Activated CD8-positive, alpha-beta memory T cell treated with anti-CD3 and anti-CD28 coated beads, Interleukin-2, amount 10 ng/mL, durations not matched to agents 7 days and 5 days (primary cell): ENCODE measurements at regions of chr7 and their contacts with region 1.

Region 1: GRCh38 chr7:158976849-158977593 is 120.7 kb downstream of the DYNC2I1 start:
- DNase-seq: peak; percentile 92
- ATAC-seq: peak; percentile 82
- H3K4me3 Mint-ChIP-seq: peak overlapping the region; percentile 68
- H3K27ac Mint-ChIP-seq: peak overlapping the region; percentile 85
- H3K4me1 Mint-ChIP-seq: peaks cover 17% of the 10 kb centered on the region
- H3K27me3 Mint-ChIP-seq: no peaks in the 10 kb centered on the region

Region 2: DNA sequence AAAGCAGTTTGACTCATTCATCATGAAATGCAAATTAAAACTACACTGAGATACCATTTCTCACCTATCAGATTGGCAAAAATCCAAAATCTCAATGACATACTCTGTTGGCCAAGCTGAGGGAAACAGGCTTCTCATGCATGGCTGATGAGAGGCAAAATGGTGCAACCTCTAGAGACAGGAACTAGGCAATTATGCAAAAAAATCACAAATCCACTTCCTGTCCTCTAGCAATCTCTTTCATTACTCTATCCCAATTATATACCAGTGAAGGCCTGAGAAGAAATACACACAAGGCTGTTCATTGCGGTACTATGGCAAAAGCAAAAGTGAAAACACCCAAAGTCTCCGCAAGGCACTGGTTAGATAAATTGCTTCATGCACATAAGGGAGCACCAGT is 363.5 kb before region 1 on chr7:
- CTCF ChIA-PET with region 1: no interaction called
- DNase-seq: no peak
- ATAC-seq: no peak
- H3K4me3 Mint-ChIP-seq: no peak overlapping the region
- H3K27ac Mint-ChIP-seq: no peak overlapping the region
- H3K4me1 Mint-ChIP-seq: peaks cover 9% of the 10 kb centered on the region
- H3K27me3 Mint-ChIP-seq: no peaks in the 10 kb centered on the region

Region 3: DNA sequence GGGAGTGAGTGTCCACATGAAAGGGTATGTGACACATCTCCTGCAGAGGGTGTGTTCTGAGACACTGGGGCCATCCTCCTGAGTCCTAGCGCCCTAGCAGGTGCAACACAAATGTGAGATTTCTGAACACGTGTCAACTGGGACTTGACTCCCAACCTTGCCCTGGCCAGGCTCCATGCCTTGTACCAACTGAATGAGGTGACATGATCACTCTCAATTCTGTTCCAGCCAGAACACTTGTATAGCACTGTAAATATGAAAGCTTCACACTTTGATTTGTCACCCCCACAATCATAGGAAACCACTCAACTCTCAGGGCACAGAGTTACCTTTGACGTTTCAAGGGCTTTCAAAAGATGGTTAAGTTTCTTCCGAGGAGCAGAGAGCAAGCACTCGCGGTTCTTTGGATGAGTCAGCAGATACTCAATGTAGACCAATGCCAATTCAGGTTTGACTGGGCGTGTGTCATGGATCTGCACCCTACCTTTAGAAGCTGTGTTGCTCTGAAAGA is 321.0 kb before region 1 on chr7:
- CTCF ChIA-PET with region 1: interaction called, 11 read pairs
- DNase-seq: peak; percentile 92
- ATAC-seq: peak; percentile 98
- H3K4me3 Mint-ChIP-seq: peak overlapping the region; percentile 54
- H3K27ac Mint-ChIP-seq: peak overlapping the region; percentile 91
- H3K4me1 Mint-ChIP-seq: peaks cover 40% of the 10 kb centered on the region
- H3K27me3 Mint-ChIP-seq: no peaks in the 10 kb centered on the region

Region 4: DNA sequence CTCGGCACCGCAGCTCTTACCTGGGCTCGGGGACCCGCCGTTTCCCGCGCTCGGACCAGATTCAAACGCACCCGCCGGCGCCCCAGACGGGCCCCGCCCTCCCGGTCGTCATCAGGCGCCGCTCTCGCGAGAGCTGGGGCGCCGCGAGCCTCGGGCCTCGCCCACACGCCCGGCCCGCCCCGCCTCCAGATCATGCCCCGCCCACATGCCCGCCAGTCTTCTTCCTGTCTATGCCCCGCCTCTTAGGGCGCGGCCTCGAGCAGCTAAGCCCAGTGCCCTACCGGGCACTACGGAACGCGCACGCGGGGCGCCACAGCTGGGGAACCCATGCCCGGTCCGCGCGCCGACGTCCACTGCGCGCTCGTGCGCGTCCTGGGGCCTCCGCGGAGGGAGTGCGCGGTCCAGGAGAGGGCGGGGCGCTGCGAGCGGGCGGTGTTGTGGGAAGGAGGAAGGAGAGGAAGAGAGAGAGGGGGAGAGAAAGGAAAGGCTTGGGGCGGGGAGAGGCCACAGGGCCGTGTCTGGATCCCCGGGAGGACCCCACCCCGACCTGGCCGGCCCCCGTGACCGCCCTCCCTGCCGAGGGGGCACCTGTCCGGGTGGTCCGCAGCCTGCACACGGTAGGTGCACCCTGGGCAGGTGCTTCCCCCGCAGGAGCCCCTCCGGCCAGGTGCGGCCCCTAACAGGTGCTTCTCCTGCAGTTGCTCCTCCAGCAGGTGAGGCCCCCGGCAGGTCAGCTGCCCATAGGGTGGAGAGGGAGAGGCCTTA is 272.1 kb before region 1 on chr7 and contains the start of gene NCAPG2:
- CTCF ChIA-PET with region 1: interaction called, 24 read pairs
- DNase-seq: peak; percentile 98
- ATAC-seq: peak; percentile 97
- H3K4me3 Mint-ChIP-seq: peak within 1 kb of the TSS; percentile 81
- H3K27ac Mint-ChIP-seq: peak within 1 kb of the TSS; percentile 89
- H3K4me1 Mint-ChIP-seq: peaks cover 48% of the 10 kb centered on the region
- H3K27me3 Mint-ChIP-seq: no peaks in the 10 kb centered on the region
- total RNA-seq, gene NCAPG2: 146 to 182 TPM

Region 5: DNA sequence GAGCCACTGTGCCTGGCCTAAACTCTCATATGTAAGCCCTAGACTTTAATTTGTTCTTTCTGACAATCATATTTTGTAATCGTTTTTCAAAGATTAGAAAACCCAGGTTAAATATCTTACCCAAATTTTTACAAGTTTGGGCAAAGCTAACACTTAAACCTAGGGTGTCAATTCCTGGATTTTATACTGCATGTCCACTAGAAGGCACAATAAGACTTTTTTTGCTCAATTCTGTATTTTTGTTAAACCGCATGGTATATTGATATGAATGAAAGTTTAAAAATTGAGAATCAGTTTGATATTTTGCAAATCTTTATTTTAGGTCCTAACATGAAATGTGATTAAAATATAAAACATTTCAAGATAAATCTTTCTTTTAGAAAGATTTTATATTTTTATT is 91.4 kb before region 1 on chr7:
- CTCF ChIA-PET with region 1: interaction called, 16 read pairs
- DNase-seq: no peak
- ATAC-seq: no peak
- H3K4me3 Mint-ChIP-seq: no peak overlapping the region
- H3K27ac Mint-ChIP-seq: no peak overlapping the region
- H3K4me1 Mint-ChIP-seq: no peaks in the 10 kb centered on the region
- H3K27me3 Mint-ChIP-seq: no peaks in the 10 kb centered on the region

Region 6: GRCh38 chr7:158966780-158967390 is 10.1 kb before region 1 on chr7:
- CTCF ChIA-PET with region 1: interaction called, 18 read pairs
- DNase-seq: no peak
- ATAC-seq: no peak
- H3K4me3 Mint-ChIP-seq: no peak overlapping the region
- H3K27ac Mint-ChIP-seq: no peak overlapping the region
- H3K4me1 Mint-ChIP-seq: no peaks in the 10 kb centered on the region
- H3K27me3 Mint-ChIP-seq: peaks cover 4% of the 10 kb centered on the region

Region 7: GRCh38 chr7:159030490-159031134 is 53.6 kb after region 1 on chr7:
- CTCF ChIA-PET with region 1: no interaction called
- DNase-seq: peak; percentile 33
- ATAC-seq: peak; percentile 33
- H3K4me3 Mint-ChIP-seq: no peak overlapping the region
- H3K27ac Mint-ChIP-seq: no peak overlapping the region
- H3K4me1 Mint-ChIP-seq: no peaks in the 10 kb centered on the region
- H3K27me3 Mint-ChIP-seq: peaks cover 16% of the 10 kb centered on the region